Right cardiac atrium (tissue), 5 donors: ENCODE measurements at regions of chrX and their contacts with region 1.

Region 1: GRCh38 chrX:20101934-20102581 is 14.6 kb downstream of the MAP7D2 start:
- DNase-seq: no peak
- ATAC-seq: no peak
- H3K4me3 ChIP-seq: no peak overlapping the region
- H3K27ac ChIP-seq: no peak overlapping the region
- H3K4me1 ChIP-seq: no peaks in the 10 kb centered on the region
- H3K27me3 ChIP-seq: no peaks in the 10 kb centered on the region

Region 2: GRCh38 chrX:19875050-19875431 is 227.0 kb before region 1 on chrX:
- intact Hi-C with region 1: no loop called
- DNase-seq: no peak
- ATAC-seq: peak in 1 of 2 donors; percentile 13
- H3K4me3 ChIP-seq: no peak overlapping the region
- H3K27ac ChIP-seq: no peak overlapping the region
- H3K4me1 ChIP-seq: no peaks in the 10 kb centered on the region
- H3K27me3 ChIP-seq: no peaks in the 10 kb centered on the region

Region 3: GRCh38 chrX:19964017-19964710 is 137.9 kb before region 1 on chrX:
- intact Hi-C with region 1: no loop called
- DNase-seq: no peak
- ATAC-seq: no peak
- H3K4me3 ChIP-seq: no peak overlapping the region
- H3K27ac ChIP-seq: no peak overlapping the region
- H3K4me1 ChIP-seq: no peaks in the 10 kb centered on the region
- H3K27me3 ChIP-seq: no peaks in the 10 kb centered on the region

Region 4: GRCh38 chrX:20452487-20452886 is 350.4 kb after region 1 on chrX:
- intact Hi-C with region 1: loop called in 1 of 4 experiments (anchors 5 kb)
- DNase-seq: no peak
- ATAC-seq: no peak
- H3K4me3 ChIP-seq: no peak overlapping the region
- H3K27ac ChIP-seq: no peak overlapping the region
- H3K4me1 ChIP-seq: no peaks in the 10 kb centered on the region
- H3K27me3 ChIP-seq: no peaks in the 10 kb centered on the region